Ascending aorta (tissue), 2 donors: ENCODE measurements at regions of chr9 and their contacts with region 1.

Region 1: GRCh38 chr9:122904823-122905710 is at the start of gene RC3H2:
- DNase-seq: peak; percentile 98 to 100
- H3K4me3 ChIP-seq: peak within 1 kb of the TSS; percentile 83 to 96
- H3K27ac ChIP-seq: peak within 1 kb of the TSS; percentile 97 to 98
- H3K4me1 ChIP-seq: peaks cover 0 to 26% of the 10 kb centered on the region in 2 donors
- H3K27me3 ChIP-seq: no peaks in the 10 kb centered on the region
- CTCF ChIP-seq: no peak
- total RNA-seq, gene RC3H2: 25.1 TPM

Region 2: GRCh38 chr9:122931226-122932121 is 26.4 kb after region 1 on chr9 and contains the start of gene ZBTB26:
- intact Hi-C with region 1: loop called (anchors 1 kb)
- DNase-seq: peak; percentile 80 to 97
- H3K4me3 ChIP-seq: peak within 1 kb of the TSS; percentile 82 to 84
- H3K27ac ChIP-seq: peak within 1 kb of the TSS; percentile 78 to 80
- H3K4me1 ChIP-seq: peaks cover 6 to 20% of the 10 kb centered on the region in 2 donors
- H3K27me3 ChIP-seq: no peaks in the 10 kb centered on the region
- CTCF ChIP-seq: no peak
- total RNA-seq, gene ZBTB26: 0.96 TPM

Region 3: DNA sequence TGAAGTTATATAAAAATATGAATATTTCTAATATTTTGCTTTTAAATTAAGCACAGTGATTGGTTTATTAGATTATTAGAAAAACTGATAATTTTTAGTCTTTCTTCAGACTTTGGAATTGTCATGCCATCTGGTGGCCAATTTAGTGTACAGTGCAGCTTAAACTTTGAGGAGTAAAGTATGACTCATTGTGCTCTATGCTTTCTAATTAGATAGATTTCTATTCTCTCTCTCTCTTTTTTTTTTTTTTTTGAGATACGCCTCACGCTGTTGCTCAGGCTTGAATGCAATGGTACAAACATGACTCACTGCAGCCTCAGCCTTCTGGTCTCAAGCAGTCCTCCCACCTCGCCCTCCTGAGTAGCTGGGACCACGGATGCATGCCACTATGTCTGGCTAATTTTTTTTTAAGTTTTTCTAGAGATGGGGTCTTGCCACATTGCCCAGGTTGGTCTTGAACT is 86.3 kb after region 1 on chr9:
- intact Hi-C with region 1: loop called (anchors 1 kb)
- DNase-seq: peak in 1 of 2 donors; percentile 68
- H3K4me3 ChIP-seq: no peak overlapping the region
- H3K27ac ChIP-seq: peak overlapping the region in 1 of 2 donors; percentile 60
- H3K4me1 ChIP-seq: no peaks in the 10 kb centered on the region
- H3K27me3 ChIP-seq: no peaks in the 10 kb centered on the region
- CTCF ChIP-seq: peak; percentile 53 to 70 (median 57)

Region 4: GRCh38 chr9:123268240-123268949 is 363.3 kb after region 1 on chr9 and contains the start of gene STRBP:
- intact Hi-C with region 1: loop called (anchors 2 kb)
- DNase-seq: peak; percentile 59 to 93
- H3K4me3 ChIP-seq: peak within 1 kb of the TSS; percentile 79 to 87
- H3K27ac ChIP-seq: no peak within 1 kb of the TSS
- H3K4me1 ChIP-seq: peaks cover 0 to 5% of the 10 kb centered on the region in 2 donors
- H3K27me3 ChIP-seq: no peaks in the 10 kb centered on the region
- CTCF ChIP-seq: no peak
- total RNA-seq, gene STRBP: 0.43 TPM